Heart left ventricle (tissue), 16 donors: ENCODE measurements at regions of chr10 and their contacts with region 1.

Region 1: DNA sequence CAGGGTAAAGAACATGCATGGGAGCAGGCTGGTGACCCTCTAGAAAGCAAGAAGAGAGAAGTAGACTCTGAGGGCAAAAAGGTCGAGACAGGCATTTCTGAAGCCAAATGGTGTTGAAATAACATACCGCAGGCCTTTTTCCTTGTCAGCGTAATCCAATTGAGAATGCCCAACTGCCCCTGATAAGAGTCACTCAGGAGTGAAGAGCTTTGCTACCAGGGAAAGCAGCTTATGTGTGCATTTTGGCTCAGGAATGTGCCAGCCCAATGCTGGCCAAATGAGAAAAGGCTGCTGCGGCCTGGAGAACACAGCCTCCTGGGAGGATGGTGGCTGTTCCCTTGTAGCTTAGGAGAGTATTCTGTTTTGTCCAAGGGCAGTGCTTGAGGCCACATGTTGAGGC is 61.4 kb upstream of the NFKB2 start:
- DNase-seq: peak; percentile 45 to 74 (median 63)
- ATAC-seq: peak; percentile 87 to 94 (median 90)
- H3K4me3 ChIP-seq: no peak overlapping the region
- H3K27ac ChIP-seq: peak overlapping the region in 10 of 12 donors; percentile 59 to 78 (median 74)
- H3K4me1 ChIP-seq: peaks cover 0 to 48% (median 20%) of the 10 kb centered on the region in 12 donors
- H3K27me3 ChIP-seq: no peaks in the 10 kb centered on the region
- CTCF ChIP-seq: no peak
- POLR2A ChIP-seq: no peak

Region 2: DNA sequence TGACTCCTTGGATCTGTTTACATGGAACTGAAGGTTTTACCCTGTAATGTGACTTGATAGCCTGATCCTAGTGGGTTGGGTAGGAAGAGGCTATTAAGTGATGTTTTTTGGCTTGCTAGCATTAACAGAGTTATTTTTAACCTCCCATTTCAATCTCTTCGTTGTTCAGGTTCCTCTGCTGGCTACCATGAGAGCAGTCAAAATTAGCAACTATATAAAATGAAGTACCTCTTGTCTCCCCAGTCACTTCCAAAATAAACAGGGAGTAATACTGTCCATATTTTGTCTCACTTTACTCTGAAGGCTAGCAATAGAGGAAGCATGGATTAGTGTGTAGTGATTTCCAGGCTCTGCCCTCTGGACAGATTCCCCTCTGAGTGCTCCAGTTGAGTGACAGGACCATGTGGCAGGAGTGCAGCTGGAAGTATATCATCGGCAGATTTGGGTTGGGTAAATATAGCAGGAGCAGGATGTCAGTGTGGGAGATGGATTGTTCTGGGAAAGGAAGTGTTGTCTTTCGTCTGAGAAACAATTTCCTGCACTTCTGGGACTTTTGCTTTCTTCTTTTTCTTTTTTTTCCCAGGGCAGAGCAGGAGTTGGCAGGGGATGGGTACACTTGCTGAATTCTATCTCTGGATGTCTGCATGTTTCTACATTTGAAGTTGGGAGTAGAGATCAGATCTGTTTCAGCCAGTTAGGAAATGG is 53.6 kb before region 1 on chr10:
- intact Hi-C with region 1: loop called in 7 of 10 experiments (anchors 1 to 10 kb)
- DNase-seq: peak in 4 of 5 donors; percentile 61 to 67 (median 64)
- ATAC-seq: peak; percentile 88 to 97 (median 92)
- H3K4me3 ChIP-seq: peak overlapping the region in 10 of 12 donors; percentile 3 to 50 (median 28)
- H3K27ac ChIP-seq: peak overlapping the region; percentile 42 to 93 (median 84)
- H3K4me1 ChIP-seq: peaks cover 0 to 71% (median 55%) of the 10 kb centered on the region in 12 donors
- H3K27me3 ChIP-seq: no peaks in the 10 kb centered on the region
- CTCF ChIP-seq: no peak
- POLR2A ChIP-seq: peak in 1 of 2 donors; percentile 24

Region 3: GRCh38 chr10:102297101-102297500 is 37.0 kb before region 1 on chr10:
- intact Hi-C with region 1: no loop called
- DNase-seq: no peak
- ATAC-seq: no peak
- H3K4me3 ChIP-seq: no peak overlapping the region
- H3K27ac ChIP-seq: no peak overlapping the region
- H3K4me1 ChIP-seq: peaks cover 0 to 67% (median 21%) of the 10 kb centered on the region in 12 donors
- H3K27me3 ChIP-seq: no peaks in the 10 kb centered on the region
- CTCF ChIP-seq: no peak
- POLR2A ChIP-seq: no peak

Region 4: DNA sequence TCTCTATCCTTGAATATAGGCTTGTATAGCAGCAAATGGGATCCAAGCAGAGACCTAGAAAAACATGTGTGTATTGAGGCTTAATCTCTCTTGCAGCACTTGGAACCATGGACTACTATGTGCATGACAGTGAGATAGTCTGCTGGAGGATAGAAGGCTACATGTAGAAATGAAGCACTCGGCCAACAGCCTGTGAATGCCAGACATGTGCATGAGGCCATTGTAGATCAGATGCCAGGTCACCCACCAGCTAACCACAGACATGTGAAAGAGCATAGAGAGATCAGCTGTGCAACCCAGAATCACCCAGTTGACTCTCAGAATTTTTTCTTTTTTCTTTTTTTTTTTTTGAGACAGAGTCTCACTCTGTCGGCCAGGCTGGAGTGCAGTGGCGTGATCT is 768.1 kb after region 1 on chr10:
- intact Hi-C with region 1: no loop called
- DNase-seq: no peak
- ATAC-seq: peak; percentile 16 to 65 (median 51)
- H3K4me3 ChIP-seq: no peak overlapping the region
- H3K27ac ChIP-seq: peak overlapping the region in 1 of 12 donors; percentile 5
- H3K4me1 ChIP-seq: peaks cover 0 to 22% (median 3%) of the 10 kb centered on the region in 12 donors
- H3K27me3 ChIP-seq: no peaks in the 10 kb centered on the region
- CTCF ChIP-seq: no peak
- POLR2A ChIP-seq: no peak